HepG2 (cell line): ENCODE measurements at regions of chr10 and their contacts with region 1.

Region 1: GRCh38 chr10:48215488-48216204 is 58.9 kb downstream of the FRMPD2 start:
- DNase-seq: peak; percentile 28
- ATAC-seq: peak; percentile 85
- H3K4me3 ChIP-seq: no peak overlapping the region
- H3K27ac ChIP-seq: no peak overlapping the region
- H3K4me1 ChIP-seq: no peaks in the 10 kb centered on the region
- H3K27me3 ChIP-seq: no peaks in the 10 kb centered on the region
- CTCF ChIP-seq: peak; percentile 77
- EP300 ChIP-seq: no peak
- POLR2A ChIP-seq: no peak
- RAD21 ChIP-seq: no peak

Region 2: GRCh38 chr10:48289501-48290238 is 74.0 kb after region 1 on chr10:
- CTCF ChIA-PET with region 1: interaction called, 9 read pairs
- POLR2A ChIA-PET with region 1: no interaction called
- in situ Hi-C with region 1: no loop called
- intact Hi-C with region 1: loop called (anchors 2 kb)
- DNase-seq: peak; percentile 54
- ATAC-seq: peak; percentile 87
- H3K4me3 ChIP-seq: no peak overlapping the region
- H3K27ac ChIP-seq: no peak overlapping the region
- H3K4me1 ChIP-seq: peaks cover 25% of the 10 kb centered on the region
- H3K27me3 ChIP-seq: no peaks in the 10 kb centered on the region
- CTCF ChIP-seq: peak; percentile 80
- EP300 ChIP-seq: no peak
- POLR2A ChIP-seq: no peak
- RAD21 ChIP-seq: no peak

Region 3: DNA sequence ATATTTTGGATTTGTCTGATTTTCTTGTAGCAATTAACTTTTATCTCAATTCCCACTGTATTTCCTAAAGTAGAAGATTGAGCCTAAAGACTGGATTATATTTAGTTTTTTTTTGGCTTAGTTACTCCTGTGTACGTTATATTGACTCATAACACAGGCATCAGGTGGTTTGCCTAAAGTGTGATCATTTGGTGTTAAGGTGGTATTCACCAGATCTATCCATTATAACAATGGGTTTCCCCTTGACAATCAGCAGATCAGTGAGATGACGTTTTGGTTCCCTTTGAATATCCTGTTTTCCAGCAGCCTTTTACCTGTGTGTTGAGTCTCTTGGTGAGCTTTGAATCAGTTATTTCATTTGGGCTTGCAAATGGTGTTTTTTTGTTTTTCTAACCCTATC is 108.9 kb after region 1 on chr10:
- CTCF ChIA-PET with region 1: no interaction called
- POLR2A ChIA-PET with region 1: no interaction called
- in situ Hi-C with region 1: no loop called
- intact Hi-C with region 1: no loop called
- DNase-seq: no peak
- ATAC-seq: no peak
- H3K4me3 ChIP-seq: no peak overlapping the region
- H3K27ac ChIP-seq: no peak overlapping the region
- H3K4me1 ChIP-seq: no peaks in the 10 kb centered on the region
- H3K27me3 ChIP-seq: no peaks in the 10 kb centered on the region
- CTCF ChIP-seq: no peak
- EP300 ChIP-seq: no peak
- POLR2A ChIP-seq: no peak
- RAD21 ChIP-seq: no peak

Region 4: DNA sequence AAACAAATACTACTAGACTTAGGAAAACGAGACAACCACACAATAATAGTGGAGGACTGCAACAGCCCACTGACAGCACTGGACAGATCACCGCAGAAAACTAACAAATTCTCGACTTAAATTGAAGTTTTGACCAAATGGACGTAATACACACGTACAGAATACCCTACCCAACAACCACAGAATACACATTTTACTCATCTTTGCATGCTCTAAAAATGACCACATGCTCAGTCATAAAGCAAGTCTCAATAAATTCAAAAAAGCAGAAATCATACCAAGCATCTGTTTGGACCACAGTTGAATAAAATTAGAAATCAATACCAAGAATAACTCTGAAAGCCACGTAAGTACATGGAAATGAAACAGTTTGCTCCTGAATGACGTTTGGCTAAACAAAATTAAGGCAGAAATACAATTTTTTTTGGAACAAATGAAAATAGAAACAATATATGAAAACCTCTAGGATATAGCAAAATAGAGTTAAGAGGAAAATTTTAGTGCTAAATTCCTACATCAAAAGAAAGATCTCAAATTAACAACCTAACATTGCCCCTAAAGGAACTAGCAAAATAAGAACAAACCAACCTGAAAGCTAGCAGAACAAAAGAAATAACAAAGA is 121.4 kb after region 1 on chr10:
- CTCF ChIA-PET with region 1: no interaction called
- POLR2A ChIA-PET with region 1: no interaction called
- in situ Hi-C with region 1: no loop called
- intact Hi-C with region 1: no loop called
- DNase-seq: no peak
- ATAC-seq: no peak
- H3K4me3 ChIP-seq: no peak overlapping the region
- H3K27ac ChIP-seq: no peak overlapping the region
- H3K4me1 ChIP-seq: peaks cover 2% of the 10 kb centered on the region; the same call in 1 of the 2 replicates
- H3K27me3 ChIP-seq: no peaks in the 10 kb centered on the region
- CTCF ChIP-seq: no peak
- EP300 ChIP-seq: no peak
- POLR2A ChIP-seq: no peak
- RAD21 ChIP-seq: no peak

Region 5: DNA sequence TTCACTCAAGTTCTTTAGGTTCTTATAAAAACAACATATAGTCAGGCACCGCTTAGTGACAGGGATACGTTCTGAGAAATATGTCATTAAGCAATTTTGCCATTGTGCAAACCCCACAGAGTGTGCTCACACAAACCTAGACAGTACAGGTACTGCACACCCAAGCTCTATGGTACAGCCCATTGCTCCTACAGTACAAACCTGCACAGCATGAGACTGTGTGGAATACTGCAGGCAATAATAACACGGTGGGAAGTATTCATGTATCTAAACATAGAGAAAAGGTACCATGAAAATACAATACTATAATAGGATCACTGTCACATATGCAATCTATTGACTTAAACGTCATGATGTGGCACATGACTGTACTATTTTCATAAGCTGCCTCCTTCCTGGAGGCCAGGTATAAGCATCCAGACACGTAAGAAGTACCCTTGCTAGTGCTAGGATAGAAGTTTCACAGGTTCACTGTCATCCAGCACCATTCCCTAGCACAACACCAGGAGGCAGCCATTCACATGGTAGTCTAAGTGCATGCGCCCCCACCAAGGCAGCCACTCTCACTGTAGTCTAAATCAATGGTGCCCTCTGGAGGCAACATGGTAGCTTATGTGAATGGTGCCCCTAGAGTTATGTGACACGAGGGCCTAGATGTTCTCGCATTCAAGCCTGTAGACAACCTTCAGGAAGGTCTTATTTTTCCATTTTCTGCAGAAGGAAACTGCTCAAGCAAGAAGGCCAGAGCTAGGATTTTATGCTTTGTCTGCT is 290.7 kb after region 1 on chr10:
- CTCF ChIA-PET with region 1: interaction called, 11 read pairs
- POLR2A ChIA-PET with region 1: no interaction called
- in situ Hi-C with region 1: no loop called
- intact Hi-C with region 1: loop called (anchors 2 kb)
- DNase-seq: peak; percentile 88
- ATAC-seq: peak; percentile 96
- H3K4me3 ChIP-seq: no peak overlapping the region
- H3K27ac ChIP-seq: no peak overlapping the region
- H3K4me1 ChIP-seq: 0 out of 2 replicates have a peak, but pooled peaks cover 6% of the 10 kb centered on the region
- H3K27me3 ChIP-seq: no peaks in the 10 kb centered on the region; a peak in 2 of 5 replicates
- CTCF ChIP-seq: peak; percentile 93
- EP300 ChIP-seq: no peak
- POLR2A ChIP-seq: no peak
- RAD21 ChIP-seq: peak; percentile 83